CD4-positive, alpha-beta memory T cell (primary cell): ENCODE measurements at regions of chr16 and their contacts with region 1.

Region 1: DNA sequence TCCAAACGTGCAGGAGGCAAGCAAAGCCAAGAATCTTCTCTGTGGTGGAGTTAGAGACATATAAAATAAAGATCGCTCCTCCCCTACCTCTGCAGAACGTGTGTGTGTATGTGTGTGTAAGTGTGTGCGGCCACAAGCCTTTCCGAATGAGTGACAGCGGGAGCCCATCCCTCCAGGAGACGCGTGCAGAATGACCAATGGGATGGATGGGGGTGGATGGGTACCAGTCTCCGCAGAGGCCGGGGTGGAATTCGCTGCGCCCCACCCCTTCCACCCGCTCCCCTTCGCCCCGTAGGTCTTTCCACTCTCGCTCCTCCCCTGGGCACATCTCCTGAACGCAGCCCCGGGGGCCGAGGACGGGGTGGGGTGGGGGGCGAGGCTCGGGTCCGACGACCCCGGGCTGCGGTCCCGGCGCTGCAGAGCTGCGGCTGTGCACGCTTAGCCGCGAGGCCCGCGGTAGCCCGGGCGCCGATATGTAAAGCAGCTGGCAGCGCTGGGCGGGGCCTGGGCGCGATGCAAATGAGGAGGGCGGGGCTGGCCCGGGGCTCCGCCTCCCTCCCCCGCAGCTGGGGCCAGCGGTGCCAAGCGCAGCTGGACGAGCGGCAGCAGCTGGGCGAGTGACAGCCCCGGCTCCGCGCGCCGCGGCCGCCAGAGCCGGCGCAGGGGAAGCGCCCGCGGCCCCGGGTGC is at the start of gene PRKCB:
- DNase-seq: peak; percentile 89 to 91 (median 90)
- H3K4me3 ChIP-seq: peak within 1 kb of the TSS; percentile 62 to 68
- H3K4me3 Mint-ChIP-seq: peak within 1 kb of the TSS; percentile 97 to 100 (median 99)
- H3K27ac ChIP-seq: peak within 1 kb of the TSS; percentile 57
- H3K27ac Mint-ChIP-seq: peak within 1 kb of the TSS; percentile 90 to 96 (median 92)
- H3K4me1 ChIP-seq: peaks cover 62% of the 10 kb centered on the region
- H3K4me1 Mint-ChIP-seq: peaks cover 48 to 67% (median 54%) of the 10 kb centered on the region in 4 donors
- H3K27me3 ChIP-seq: no peaks in the 10 kb centered on the region
- H3K27me3 Mint-ChIP-seq: no peaks in the 10 kb centered on the region
- total RNA-seq, gene PRKCB: 98.1 to 106 TPM

Region 2: DNA sequence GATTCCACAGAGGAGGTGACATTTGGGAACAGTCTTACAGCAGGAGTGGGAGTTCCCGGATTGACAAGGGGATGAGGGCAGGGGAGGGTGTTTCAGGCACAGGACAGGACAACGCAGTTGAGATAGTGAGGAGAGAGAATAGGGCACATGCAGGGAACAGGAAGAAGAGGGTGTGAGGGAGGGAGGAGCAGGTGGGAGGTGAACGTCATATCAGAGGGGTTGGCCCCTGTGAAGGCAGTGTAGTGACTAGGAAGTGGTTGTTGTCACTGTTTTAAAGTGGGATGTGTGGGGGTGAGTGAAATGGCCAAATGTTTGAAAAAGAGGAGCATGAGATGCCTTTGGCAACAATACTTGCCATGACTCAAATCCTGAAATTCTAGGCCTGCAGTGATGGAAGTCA is 12.4 kb after region 1 on chr16:
- CTCF ChIA-PET with region 1: interaction called, 7 read pairs
- POLR2A ChIA-PET with region 1: interaction called, 7 read pairs
- intact Hi-C with region 1: loop called (anchors 1 kb)
- DNase-seq: peak; percentile 52 to 74 (median 63)
- H3K4me3 ChIP-seq: no peak overlapping the region
- H3K4me3 Mint-ChIP-seq: peak overlapping the region; percentile 14 to 76 (median 60)
- H3K27ac ChIP-seq: peak overlapping the region; percentile 8
- H3K27ac Mint-ChIP-seq: peak overlapping the region; percentile 78 to 95 (median 85)
- H3K4me1 ChIP-seq: peaks cover 61% of the 10 kb centered on the region
- H3K4me1 Mint-ChIP-seq: peaks cover 58 to 84% (median 69%) of the 10 kb centered on the region in 4 donors
- H3K27me3 ChIP-seq: no peaks in the 10 kb centered on the region
- H3K27me3 Mint-ChIP-seq: no peaks in the 10 kb centered on the region

Region 3: GRCh38 chr16:23863511-23864422 is 28.2 kb after region 1 on chr16:
- CTCF ChIA-PET with region 1: interaction called, 3 read pairs
- POLR2A ChIA-PET with region 1: interaction called, 9 read pairs
- intact Hi-C with region 1: loop called (anchors 2 kb)
- DNase-seq: peak; percentile 48 to 70 (median 62)
- H3K4me3 ChIP-seq: peak overlapping the region; percentile 48 to 71
- H3K4me3 Mint-ChIP-seq: peak overlapping the region; percentile 84 to 94 (median 90)
- H3K27ac ChIP-seq: peak overlapping the region; percentile 43
- H3K27ac Mint-ChIP-seq: peak overlapping the region; percentile 86 to 96 (median 88)
- H3K4me1 ChIP-seq: peaks cover 80% of the 10 kb centered on the region
- H3K4me1 Mint-ChIP-seq: peaks cover 59 to 88% (median 77%) of the 10 kb centered on the region in 4 donors
- H3K27me3 ChIP-seq: no peaks in the 10 kb centered on the region
- H3K27me3 Mint-ChIP-seq: no peaks in the 10 kb centered on the region